Naive thymus-derived CD4-positive, alpha-beta T cell (primary cell): ENCODE measurements at regions of chr17 and their contacts with region 1.

Region 1: GRCh38 chr17:81057079-81057730 is 22.3 kb downstream of the BAIAP2 start:
- DNase-seq: no peak
- ATAC-seq: no peak
- H3K4me3 ChIP-seq: no peak overlapping the region
- H3K4me3 Mint-ChIP-seq: no peak overlapping the region
- H3K27ac ChIP-seq: no peak overlapping the region
- H3K27ac Mint-ChIP-seq: peak overlapping the region in 2 of 9 donors; percentile 7 to 37
- H3K4me1 ChIP-seq: no peaks in the 10 kb centered on the region
- H3K4me1 Mint-ChIP-seq: peaks cover 0 to 5% (median 2%) of the 10 kb centered on the region in 7 donors
- H3K27me3 ChIP-seq: no peaks in the 10 kb centered on the region
- H3K27me3 Mint-ChIP-seq: no peaks in the 10 kb centered on the region

Region 2: DNA sequence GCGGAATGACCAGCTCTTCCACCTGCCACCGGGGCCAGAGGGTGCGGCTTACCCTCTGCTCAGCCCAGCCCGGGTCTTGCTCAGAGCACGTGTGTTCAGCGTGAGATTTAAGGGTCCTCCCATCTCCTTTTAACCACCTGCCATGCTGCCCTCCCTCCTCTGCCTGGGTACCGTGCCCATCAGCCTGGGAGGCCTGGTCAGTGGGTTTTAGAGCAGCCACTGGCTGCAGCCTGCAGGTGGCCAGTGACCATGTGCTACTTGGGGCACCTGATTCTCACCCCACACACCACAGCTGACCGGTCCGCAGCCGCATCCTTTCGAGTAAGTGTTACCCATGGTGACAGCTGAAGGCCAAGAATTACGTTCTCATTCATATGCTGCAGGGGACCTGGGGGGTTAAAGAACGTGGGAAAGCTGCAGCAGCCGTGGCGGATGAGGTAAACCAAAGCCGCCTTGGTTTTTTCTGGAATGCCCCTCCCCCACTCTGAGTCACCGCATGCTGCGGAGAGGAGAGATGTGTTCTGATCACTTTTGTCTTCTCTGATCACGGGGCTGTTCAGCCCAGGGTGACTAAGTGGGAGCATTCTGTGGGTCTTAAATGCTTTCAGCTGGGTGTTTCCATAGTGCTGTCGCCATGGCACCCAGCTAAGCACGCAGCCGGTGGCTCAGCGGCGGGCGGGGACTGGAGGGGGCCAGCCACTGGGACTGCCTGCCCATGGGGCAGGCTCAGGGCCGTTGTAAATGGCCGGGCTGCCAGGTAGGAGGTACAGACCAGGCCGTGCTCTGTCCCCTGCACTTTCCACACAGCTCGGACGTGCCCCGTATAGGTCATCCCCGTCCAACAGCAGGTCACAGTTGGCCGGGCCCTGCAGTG is 37.5 kb after region 1 on chr17:
- CTCF ChIA-PET with region 1: no interaction called
- POLR2A ChIA-PET with region 1: no interaction called
- intact Hi-C with region 1: loop called in 1 of 2 experiments (anchors 5 kb)
- DNase-seq: peak; percentile 42 to 91 (median 78)
- ATAC-seq: peak; percentile 89
- H3K4me3 ChIP-seq: peak overlapping the region; percentile 29
- H3K4me3 Mint-ChIP-seq: peak overlapping the region in 8 of 10 donors; percentile 17 to 77 (median 52)
- H3K27ac ChIP-seq: peak overlapping the region; percentile 56
- H3K27ac Mint-ChIP-seq: peak overlapping the region in 7 of 9 donors; percentile 8 to 93 (median 79)
- H3K4me1 ChIP-seq: peaks cover 35 to 43% of the 10 kb centered on the region in 2 donors
- H3K4me1 Mint-ChIP-seq: peaks cover 8 to 17% (median 12%) of the 10 kb centered on the region in 7 donors
- H3K27me3 ChIP-seq: no peaks in the 10 kb centered on the region
- H3K27me3 Mint-ChIP-seq: peaks cover 0 to 5% (median 0%) of the 10 kb centered on the region in 5 donors

Region 3: DNA sequence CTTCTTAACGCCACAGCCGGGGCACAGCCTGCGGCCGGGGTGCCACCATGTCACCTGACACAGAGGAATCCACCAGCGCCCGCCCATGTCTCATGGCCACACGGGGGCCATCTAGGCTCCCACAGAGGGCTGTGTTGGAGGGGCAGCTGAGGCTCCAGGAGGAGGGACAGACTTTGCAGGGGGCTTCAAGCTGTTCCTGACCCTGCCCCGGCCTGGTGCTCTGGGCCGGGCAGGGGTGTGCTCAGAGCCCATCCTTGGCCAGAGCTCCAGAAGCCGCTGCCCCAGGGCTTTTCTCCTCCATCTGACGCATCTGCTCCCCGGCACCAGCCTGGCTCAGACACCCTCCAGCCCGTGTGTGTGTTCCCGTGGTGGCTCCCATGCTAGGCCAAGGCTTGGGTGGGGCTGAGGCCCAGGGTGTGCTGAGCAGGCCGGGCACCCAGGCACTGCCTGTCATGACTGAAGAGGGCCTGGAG is 245.7 kb after region 1 on chr17:
- CTCF ChIA-PET with region 1: no interaction called
- POLR2A ChIA-PET with region 1: no interaction called
- intact Hi-C with region 1: no loop called
- DNase-seq: no peak
- ATAC-seq: no peak
- H3K4me3 ChIP-seq: no peak overlapping the region
- H3K4me3 Mint-ChIP-seq: no peak overlapping the region
- H3K27ac ChIP-seq: no peak overlapping the region
- H3K27ac Mint-ChIP-seq: no peak overlapping the region
- H3K4me1 ChIP-seq: no peaks in the 10 kb centered on the region
- H3K4me1 Mint-ChIP-seq: peaks cover 0 to 6% (median 0%) of the 10 kb centered on the region in 7 donors
- H3K27me3 ChIP-seq: no peaks in the 10 kb centered on the region
- H3K27me3 Mint-ChIP-seq: peaks cover 0 to 4% (median 0%) of the 10 kb centered on the region in 5 donors